Prostate gland (tissue), 2 donors: ENCODE measurements at regions of chr15 and their contacts with region 1.

Region 1: GRCh38 chr15:39976291-39977274 is 42.7 kb downstream of the EIF2AK4 start:
- DNase-seq: peak; percentile 68
- H3K4me3 ChIP-seq: peak overlapping the region; percentile 42 to 43
- H3K27ac ChIP-seq: peak overlapping the region; percentile 71 to 83
- H3K4me1 ChIP-seq: no peaks in the 10 kb centered on the region
- H3K27me3 ChIP-seq: no peaks in the 10 kb centered on the region
- CTCF ChIP-seq: peak; percentile 18 to 64 (median 53)
- POLR2A ChIP-seq: no peak

Region 2: DNA sequence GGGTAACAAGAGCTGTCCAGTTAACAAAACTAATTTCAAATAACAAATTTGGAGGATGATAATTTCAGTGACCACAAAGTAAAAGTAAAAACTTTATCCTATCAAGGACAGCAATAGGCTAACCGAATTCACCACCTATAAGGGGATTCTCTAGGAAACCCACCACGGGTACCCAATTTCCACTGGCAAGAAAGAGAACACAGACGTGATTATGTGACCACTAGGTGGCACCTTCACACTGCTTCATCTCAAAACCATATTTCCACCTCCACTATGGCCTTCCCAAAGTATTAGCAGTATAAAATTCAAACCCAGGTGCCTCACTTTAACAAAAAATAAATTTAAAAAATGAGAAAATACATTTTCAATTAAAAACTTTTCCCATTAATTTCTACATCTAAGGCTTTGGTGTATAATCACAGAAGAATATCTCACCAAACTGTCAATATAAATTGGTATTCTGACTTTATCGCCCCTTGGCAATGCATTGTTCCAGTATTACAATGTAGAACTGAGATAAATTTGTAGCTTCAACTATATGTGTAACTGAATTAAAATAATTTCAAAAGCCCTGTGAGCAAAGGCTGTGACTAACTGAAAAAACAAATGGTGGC is 290.5 kb before region 1 on chr15:
- intact Hi-C with region 1: loop called (anchors 10 kb)
- DNase-seq: peak; percentile 28
- H3K4me3 ChIP-seq: no peak overlapping the region
- H3K27ac ChIP-seq: no peak overlapping the region
- H3K4me1 ChIP-seq: no peaks in the 10 kb centered on the region
- H3K27me3 ChIP-seq: no peaks in the 10 kb centered on the region
- CTCF ChIP-seq: peak; percentile 43 to 80 (median 77)
- POLR2A ChIP-seq: no peak

Region 3: DNA sequence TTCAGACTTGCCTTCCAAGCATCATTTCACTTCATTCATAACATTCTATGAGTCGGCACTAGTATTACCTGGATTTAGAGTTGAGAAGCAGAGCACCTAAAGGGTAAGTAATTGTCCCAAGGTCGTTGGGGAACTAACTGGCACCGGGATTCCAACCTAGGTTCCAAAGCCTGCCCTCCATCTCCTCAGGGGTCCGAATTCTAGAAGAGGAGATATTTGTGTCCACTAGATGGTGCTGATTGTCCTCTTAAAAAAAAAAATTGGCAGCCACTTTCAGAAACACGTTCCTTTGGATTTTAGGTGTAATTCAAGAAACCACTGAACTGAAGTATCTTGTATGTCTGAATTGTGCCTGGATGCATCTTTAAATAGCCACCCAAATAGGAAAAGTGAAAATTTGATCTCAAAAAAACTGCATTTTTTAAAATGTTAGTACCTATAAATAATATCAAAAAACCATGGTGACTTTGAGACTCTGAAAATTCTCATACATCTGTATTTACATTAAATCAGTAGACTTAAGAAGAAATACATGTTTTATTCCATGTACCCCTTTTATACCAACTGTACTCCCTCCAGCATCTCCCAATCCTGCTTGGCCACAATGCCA is 190.0 kb before region 1 on chr15:
- intact Hi-C with region 1: loop called (anchors 2 kb)
- DNase-seq: no peak
- H3K4me3 ChIP-seq: no peak overlapping the region
- H3K27ac ChIP-seq: no peak overlapping the region
- H3K4me1 ChIP-seq: peaks cover 15% of the 10 kb centered on the region
- H3K27me3 ChIP-seq: no peaks in the 10 kb centered on the region
- CTCF ChIP-seq: peak; percentile 25 to 66 (median 60)
- POLR2A ChIP-seq: no peak

Region 4: DNA sequence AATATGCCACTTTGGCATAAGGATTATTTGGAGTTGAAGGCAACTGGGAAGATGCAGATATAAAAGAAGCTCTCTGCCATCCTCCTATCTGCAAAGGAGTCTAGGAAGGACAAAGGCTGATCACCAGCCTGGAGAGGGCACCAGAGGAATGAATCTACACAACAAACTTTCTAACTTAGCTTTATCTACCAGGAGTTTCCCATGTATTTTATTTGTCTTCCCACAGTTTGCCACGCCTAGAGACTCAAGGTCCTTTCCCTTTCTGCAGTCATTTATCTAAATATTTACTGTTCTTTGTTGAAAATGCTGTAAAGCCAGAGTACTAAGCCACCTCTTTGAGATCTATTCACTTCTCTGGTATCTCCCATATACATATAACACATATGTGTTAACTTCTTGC is 88.8 kb before region 1 on chr15:
- intact Hi-C with region 1: loop called (anchors 10 kb)
- DNase-seq: peak; percentile 71
- H3K4me3 ChIP-seq: no peak overlapping the region
- H3K27ac ChIP-seq: peak overlapping the region; percentile 61 to 69
- H3K4me1 ChIP-seq: peaks cover 4% of the 10 kb centered on the region
- H3K27me3 ChIP-seq: no peaks in the 10 kb centered on the region
- CTCF ChIP-seq: peak in 3 of 4 experiments; percentile 46 to 73 (median 56)
- POLR2A ChIP-seq: no peak